ENCODE measurements at regions of chr18 and their contacts with region 1.

Region 1: GRCh38 chr18:21904856-21905255 is 164.3 kb downstream of the MIB1 start:
- DNase-seq: no peak
- ATAC-seq: no peak
- H3K4me3 ChIP-seq: no peak overlapping the region
- H3K27ac ChIP-seq: no peak overlapping the region
- H3K4me1 ChIP-seq: peaks cover 0 to 9% (median 0%) of the 10 kb centered on the region in 9 donors
- H3K27me3 ChIP-seq: no peaks in the 10 kb centered on the region
- CTCF ChIP-seq: no peak

Region 2: DNA sequence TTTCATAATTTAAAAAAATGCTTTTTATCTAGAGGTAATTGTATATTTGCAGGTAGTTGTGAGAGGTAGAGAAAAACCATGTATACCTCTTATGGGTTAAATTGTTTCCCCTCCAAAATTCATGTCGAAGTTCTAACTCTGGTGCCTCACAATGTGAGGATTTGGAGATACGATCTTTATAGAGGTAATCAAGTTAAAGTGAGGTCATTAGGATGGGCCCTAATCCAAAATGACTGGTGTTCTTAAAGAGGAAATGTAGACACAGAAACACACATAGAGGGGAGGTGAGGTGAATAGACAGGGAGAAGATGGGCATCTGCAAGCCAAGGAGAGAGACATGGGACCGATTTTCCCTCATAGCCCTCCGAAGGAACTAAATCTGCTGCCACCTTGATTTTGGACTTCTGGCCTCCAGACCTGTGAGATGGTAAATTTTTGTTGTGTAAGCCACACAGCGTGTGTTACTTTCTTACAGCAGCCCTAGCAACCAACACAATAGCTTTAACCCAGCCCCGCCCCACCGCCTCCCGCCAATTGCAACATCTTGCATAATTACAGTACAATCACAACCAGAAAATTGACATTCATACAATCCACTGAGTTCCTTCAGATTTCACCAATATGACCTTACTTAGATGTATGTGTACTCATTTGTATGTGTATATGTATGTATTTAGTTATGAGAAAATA is 44.6 kb after region 1 on chr18:
- intact Hi-C with region 1: loop called in 1 of 10 experiments (anchors 5 kb)
- DNase-seq: no peak
- ATAC-seq: no peak
- H3K4me3 ChIP-seq: no peak overlapping the region
- H3K27ac ChIP-seq: no peak overlapping the region
- H3K4me1 ChIP-seq: no peaks in the 10 kb centered on the region
- H3K27me3 ChIP-seq: peaks cover 0 to 6% (median 0%) of the 10 kb centered on the region in 7 donors
- CTCF ChIP-seq: no peak

Region 3: DNA sequence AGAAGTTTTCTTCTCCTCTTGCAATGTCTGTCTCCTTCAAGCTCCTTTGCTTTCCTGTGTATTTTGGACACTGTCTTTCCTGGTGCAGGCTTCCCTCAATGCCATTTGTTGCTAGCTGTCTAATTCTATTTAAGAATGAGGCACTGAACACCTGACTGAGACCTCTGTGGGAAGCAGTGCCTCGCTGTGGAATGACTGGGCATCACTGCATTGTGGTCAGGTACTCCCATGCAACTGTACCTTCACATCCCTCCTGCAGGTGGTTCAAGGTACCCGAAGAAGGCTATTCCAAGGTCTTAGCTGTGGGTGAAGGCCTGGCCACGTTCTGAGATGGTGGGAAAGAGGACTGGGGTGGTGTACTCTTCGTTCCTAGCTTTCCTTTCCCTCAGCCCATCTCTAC is 665.6 kb after region 1 on chr18:
- intact Hi-C with region 1: loop called in 5 of 10 experiments (anchors 10 kb)
- DNase-seq: no peak
- ATAC-seq: no peak
- H3K4me3 ChIP-seq: no peak overlapping the region
- H3K27ac ChIP-seq: no peak overlapping the region
- H3K4me1 ChIP-seq: peaks cover 0 to 10% (median 0%) of the 10 kb centered on the region in 9 donors
- H3K27me3 ChIP-seq: no peaks in the 10 kb centered on the region
- CTCF ChIP-seq: no peak